Calu3 (cell line): ENCODE measurements at regions of chrX and their contacts with region 1.

Region 1: DNA sequence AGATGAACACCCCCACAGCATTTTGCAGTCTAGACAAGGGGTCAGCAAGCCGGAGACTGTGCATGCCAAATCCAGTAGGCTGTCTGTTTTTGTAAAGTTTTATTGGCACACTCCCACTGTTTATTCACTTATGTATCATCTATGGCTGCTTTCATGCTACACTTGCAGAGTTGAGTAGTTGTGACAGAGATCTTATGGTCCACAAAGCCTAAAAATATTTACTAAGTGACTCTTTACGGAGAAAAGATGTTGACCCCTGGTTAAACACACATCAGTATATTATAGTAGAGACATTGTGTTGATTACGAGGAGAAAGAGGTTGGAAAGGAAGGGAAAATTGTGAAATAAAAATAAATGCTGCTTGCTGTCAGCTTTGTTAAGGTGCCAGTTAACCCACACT is 2.2 kb upstream of the LHFPL1 start:
- DNase-seq: no peak
- H3K4me3 Mint-ChIP-seq: no peak overlapping the region
- H3K27ac Mint-ChIP-seq: no peak overlapping the region
- H3K4me1 Mint-ChIP-seq: peaks cover 7% of the 10 kb centered on the region
- H3K27me3 Mint-ChIP-seq: peaks cover 24% of the 10 kb centered on the region
- CTCF ChIP-seq: no peak

Region 2: DNA sequence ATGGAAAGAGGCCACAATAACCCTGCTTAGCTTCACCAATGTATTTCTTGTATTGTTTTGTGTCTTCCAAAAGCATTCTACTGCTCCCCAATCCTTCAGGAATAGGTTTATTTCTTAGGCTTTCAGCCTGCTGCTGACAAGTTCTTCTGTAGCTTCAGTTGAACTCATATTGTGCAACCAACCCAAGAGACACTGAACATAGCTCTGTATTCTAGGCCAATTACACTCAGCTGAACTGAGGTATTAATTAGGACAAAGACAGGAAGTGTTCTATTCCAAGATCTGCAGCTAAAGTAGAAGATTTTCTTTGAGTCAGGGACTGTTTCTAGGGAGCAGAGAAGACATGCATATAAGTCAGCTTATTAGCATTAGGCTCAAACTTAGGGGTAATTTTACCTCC is 154.1 kb before region 1 on chrX:
- CTCF ChIA-PET with region 1: no interaction called
- intact Hi-C with region 1: no loop called
- DNase-seq: no peak
- H3K4me3 Mint-ChIP-seq: no peak overlapping the region
- H3K27ac Mint-ChIP-seq: no peak overlapping the region
- H3K4me1 Mint-ChIP-seq: no peaks in the 10 kb centered on the region
- H3K27me3 Mint-ChIP-seq: no peaks in the 10 kb centered on the region
- CTCF ChIP-seq: no peak

Region 3: GRCh38 chrX:112642349-112642748 is 39.6 kb before region 1 on chrX:
- CTCF ChIA-PET with region 1: no interaction called
- intact Hi-C with region 1: no loop called
- DNase-seq: peak; percentile 20
- H3K4me3 Mint-ChIP-seq: no peak overlapping the region
- H3K27ac Mint-ChIP-seq: no peak overlapping the region
- H3K4me1 Mint-ChIP-seq: no peaks in the 10 kb centered on the region
- H3K27me3 Mint-ChIP-seq: peaks cover 16% of the 10 kb centered on the region
- CTCF ChIP-seq: peak; percentile 45

Region 4: DNA sequence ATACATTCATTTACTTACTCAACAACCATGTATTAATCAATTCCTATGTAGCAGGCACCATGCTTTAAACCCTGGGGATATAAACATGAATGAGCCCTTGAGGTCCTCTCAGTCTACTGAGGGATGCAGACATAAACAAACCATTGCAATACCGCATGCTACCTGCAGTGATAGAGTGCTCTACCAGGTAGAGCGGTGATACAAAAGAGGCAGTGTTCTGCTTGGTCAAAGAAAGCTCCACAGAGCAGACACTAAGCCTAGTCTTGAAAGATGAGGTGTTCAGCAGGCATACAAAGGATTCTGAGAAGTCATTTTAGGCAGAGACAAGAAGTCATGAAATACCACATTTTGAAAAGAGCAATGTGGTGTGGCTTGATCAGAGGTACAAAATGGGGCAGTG is 185.6 kb after region 1 on chrX:
- CTCF ChIA-PET with region 1: no interaction called
- intact Hi-C with region 1: loop called (anchors 5 kb)
- DNase-seq: peak; percentile 24
- H3K4me3 Mint-ChIP-seq: no peak overlapping the region
- H3K27ac Mint-ChIP-seq: no peak overlapping the region
- H3K4me1 Mint-ChIP-seq: peaks cover 9% of the 10 kb centered on the region
- H3K27me3 Mint-ChIP-seq: no peaks in the 10 kb centered on the region
- CTCF ChIP-seq: no peak